ENCODE measurements at regions of chr19 and their contacts with region 1.

Region 1: GRCh38 chr19:54245936-54246335 is 3.3 kb upstream of the LILRA6 start:
- DNase-seq: no peak
- H3K4me3 Mint-ChIP-seq: no peak overlapping the region
- H3K27ac Mint-ChIP-seq: no peak overlapping the region
- H3K4me1 Mint-ChIP-seq: peaks cover 12% of the 10 kb centered on the region
- H3K27me3 Mint-ChIP-seq: peaks cover 4% of the 10 kb centered on the region

Region 2: GRCh38 chr19:54218960-54219661 is 26.8 kb before region 1 on chr19:
- intact Hi-C with region 1: loop called (anchors 2 kb)
- DNase-seq: no peak
- H3K4me3 Mint-ChIP-seq: no peak overlapping the region
- H3K27ac Mint-ChIP-seq: no peak overlapping the region
- H3K4me1 Mint-ChIP-seq: peaks cover 10% of the 10 kb centered on the region
- H3K27me3 Mint-ChIP-seq: no peaks in the 10 kb centered on the region

Region 3: GRCh38 chr19:54282686-54283470 is 36.9 kb after region 1 on chr19:
- intact Hi-C with region 1: no loop called
- DNase-seq: no peak
- H3K4me3 Mint-ChIP-seq: no peak overlapping the region
- H3K27ac Mint-ChIP-seq: no peak overlapping the region
- H3K4me1 Mint-ChIP-seq: peaks cover 7% of the 10 kb centered on the region
- H3K27me3 Mint-ChIP-seq: peaks cover 27% of the 10 kb centered on the region

Measured in activated T-helper 1 cell treated with anti-CD3 and anti-CD28 coated beads, Interleukin-12 subunit alpha, Interleukin-12 subunit beta, Interleukin-2, Interleukin-4 antibody, amounts not matched to agents 30 ng/mL and 10 ng/mL and 1 ng/mL, durations not matched to agents 14 hours and 24 hours and 36 hours (primary cell).